CD4-positive, alpha-beta T cell (primary cell): ENCODE measurements at regions of chr2 and their contacts with region 1.

Region 1: DNA sequence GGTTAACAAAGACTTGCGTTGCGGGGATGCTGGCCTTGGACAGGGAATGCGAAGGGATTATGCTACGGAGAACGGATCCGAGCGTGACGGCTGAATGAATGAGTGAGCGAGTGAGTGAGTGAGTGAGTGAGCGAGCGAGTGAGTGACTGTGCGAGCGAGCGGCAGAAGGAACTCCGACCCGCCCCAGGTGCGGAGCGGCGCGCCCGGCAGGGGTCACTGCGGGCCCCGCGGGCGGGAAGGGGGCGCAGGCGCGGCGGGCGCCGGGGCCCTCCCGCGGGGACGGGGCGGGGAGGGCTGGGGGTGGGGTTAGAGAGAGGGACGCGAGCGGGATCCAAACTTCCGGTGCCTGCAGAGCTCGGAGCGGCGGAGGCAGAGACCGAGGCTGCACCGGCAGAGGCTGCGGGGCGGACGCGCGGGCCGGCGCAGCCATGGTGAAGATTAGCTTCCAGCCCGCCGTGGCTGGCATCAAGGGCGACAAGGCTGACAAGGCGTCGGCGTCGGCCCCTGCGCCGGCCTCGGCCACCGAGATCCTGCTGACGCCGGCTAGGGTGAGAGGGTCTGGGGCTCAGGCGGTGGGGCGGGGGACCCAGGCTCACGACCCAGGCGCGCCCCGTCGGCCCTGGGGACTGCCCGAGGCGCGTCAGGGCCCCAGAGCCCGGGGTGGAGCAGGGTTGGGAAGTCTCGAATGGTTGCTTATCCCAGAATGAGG is at the start of gene ITM2C:
- DNase-seq: peak; percentile 51 to 91 (median 71)
- ATAC-seq: peak; percentile 83
- H3K4me3 ChIP-seq: peak within 1 kb of the TSS; percentile 70
- H3K4me3 Mint-ChIP-seq: peak within 1 kb of the TSS; percentile 92
- H3K27ac ChIP-seq: peak within 1 kb of the TSS in 1 of 2 donors; percentile 21
- H3K27ac Mint-ChIP-seq: peak within 1 kb of the TSS; percentile 63
- H3K4me1 ChIP-seq: peaks cover 54% of the 10 kb centered on the region
- H3K4me1 Mint-ChIP-seq: peaks cover 53% of the 10 kb centered on the region
- H3K27me3 ChIP-seq: peaks cover 0 to 2% of the 10 kb centered on the region in 2 experiments
- H3K27me3 Mint-ChIP-seq: no peaks in the 10 kb centered on the region
- CTCF ChIP-seq: peak; percentile 35
- total RNA-seq, gene ITM2C: 19.8 to 21.5 TPM

Region 2: DNA sequence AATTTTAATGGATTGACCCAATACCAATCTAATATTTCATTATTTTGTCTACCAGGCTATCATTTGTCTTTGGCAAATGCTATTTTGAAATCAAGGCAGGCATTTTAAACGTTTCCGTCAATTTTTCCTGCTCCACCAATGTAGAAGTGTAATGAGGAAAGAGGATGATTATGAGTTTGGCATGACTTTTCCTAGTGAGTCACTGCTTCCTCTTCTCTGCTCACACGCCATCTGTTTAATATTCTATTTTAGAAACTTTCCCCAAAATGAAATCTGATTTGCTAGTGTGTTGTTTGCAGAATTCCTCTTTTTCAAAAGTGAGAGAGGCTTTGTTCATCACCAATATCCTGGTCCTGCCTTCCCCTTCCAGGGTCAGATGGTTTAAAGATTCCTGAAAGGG is 1551.2 kb before region 1 on chr2:
- CTCF ChIA-PET with region 1: no interaction called
- POLR2A ChIA-PET with region 1: no interaction called
- intact Hi-C with region 1: no loop called
- DNase-seq: peak in 2 of 14 experiments; percentile 55 to 61
- ATAC-seq: no peak
- H3K4me3 ChIP-seq: no peak overlapping the region
- H3K4me3 Mint-ChIP-seq: no peak overlapping the region
- H3K27ac ChIP-seq: peak overlapping the region in 1 of 2 donors; percentile 34
- H3K27ac Mint-ChIP-seq: no peak overlapping the region
- H3K4me1 ChIP-seq: no peaks in the 10 kb centered on the region
- H3K4me1 Mint-ChIP-seq: no peaks in the 10 kb centered on the region
- H3K27me3 ChIP-seq: no peaks in the 10 kb centered on the region
- H3K27me3 Mint-ChIP-seq: no peaks in the 10 kb centered on the region
- CTCF ChIP-seq: no peak

Region 3: DNA sequence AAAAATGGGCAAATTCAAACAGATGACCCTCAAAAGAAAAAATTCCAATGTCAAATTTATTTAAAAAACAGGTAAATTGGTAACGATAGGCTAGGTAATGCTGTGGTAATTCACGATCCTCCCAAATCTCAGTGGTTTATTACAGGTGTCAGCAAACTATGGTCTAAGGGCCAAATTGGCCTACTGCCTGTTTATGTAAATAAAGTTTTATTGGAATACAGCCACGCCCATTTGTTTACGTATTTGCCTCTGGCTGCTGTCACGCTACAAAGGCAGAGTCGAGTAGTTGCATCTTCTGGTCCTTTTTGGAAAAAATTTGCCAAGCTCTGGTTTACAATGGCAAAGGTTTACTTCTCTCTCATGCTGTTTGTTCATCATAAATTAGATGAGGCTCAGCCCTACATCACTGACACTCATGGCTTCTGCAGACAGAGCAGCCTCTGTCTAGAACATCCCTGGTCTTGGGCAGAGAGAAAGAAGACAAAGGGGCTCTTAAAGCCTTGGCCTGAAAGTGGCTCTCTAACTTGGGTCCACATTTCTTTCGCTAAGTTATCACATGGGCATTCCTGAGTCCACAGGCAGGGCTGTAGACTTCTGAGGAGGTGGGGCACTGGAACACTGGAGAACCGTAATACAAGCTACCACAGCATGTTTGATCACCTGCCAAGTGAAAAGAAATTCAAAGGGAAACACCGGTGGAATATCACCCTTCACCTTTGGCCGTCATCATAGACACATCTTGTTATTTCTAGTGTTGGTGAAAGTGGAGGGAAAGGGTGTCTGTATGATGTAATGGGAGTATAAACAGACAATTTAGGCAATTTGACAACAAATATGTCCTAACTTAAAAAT is 679.8 kb before region 1 on chr2:
- CTCF ChIA-PET with region 1: no interaction called
- POLR2A ChIA-PET with region 1: no interaction called
- intact Hi-C with region 1: no loop called
- DNase-seq: no peak
- ATAC-seq: no peak
- H3K4me3 ChIP-seq: no peak overlapping the region
- H3K4me3 Mint-ChIP-seq: no peak overlapping the region
- H3K27ac ChIP-seq: no peak overlapping the region
- H3K27ac Mint-ChIP-seq: peak overlapping the region; percentile 24
- H3K4me1 ChIP-seq: no peaks in the 10 kb centered on the region
- H3K4me1 Mint-ChIP-seq: peaks cover 9% of the 10 kb centered on the region
- H3K27me3 ChIP-seq: no peaks in the 10 kb centered on the region
- H3K27me3 Mint-ChIP-seq: no peaks in the 10 kb centered on the region
- CTCF ChIP-seq: no peak

Region 4: DNA sequence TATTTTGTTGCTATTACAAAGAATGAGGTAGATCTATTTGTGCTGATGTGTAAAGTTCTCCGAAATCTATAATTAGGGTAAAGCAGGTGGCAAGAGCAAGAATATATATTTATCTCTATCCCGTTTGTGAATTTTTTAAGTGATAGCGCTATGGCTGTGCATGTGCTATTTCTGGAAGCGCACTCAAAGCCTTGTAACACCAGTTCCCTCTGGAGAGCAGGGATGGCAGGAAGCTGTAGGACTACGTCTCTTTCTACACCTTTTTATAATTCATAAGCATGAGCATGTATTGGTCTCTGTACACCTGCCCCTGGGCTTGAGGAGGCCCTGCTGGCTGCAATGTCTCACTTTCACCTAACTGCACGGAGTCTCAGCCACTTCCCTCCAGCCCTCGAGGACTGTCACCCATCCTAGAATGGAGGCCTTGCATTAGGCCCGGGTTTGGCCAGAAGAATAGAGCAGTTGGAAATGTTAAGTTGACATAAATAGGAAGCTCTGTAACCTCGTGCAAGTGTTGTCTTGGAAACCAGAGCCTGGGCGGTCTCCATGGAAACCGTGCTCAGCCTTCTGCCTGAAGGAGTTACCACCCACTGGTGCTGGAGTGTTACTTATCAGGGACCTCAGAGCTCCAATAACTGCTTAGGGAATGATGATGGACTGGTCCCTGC is 20.8 kb after region 1 on chr2:
- CTCF ChIA-PET with region 1: no interaction called
- POLR2A ChIA-PET with region 1: no interaction called
- intact Hi-C with region 1: no loop called
- DNase-seq: peak in 1 of 14 experiments; percentile 23
- ATAC-seq: no peak
- H3K4me3 ChIP-seq: no peak overlapping the region
- H3K4me3 Mint-ChIP-seq: no peak overlapping the region
- H3K27ac ChIP-seq: no peak overlapping the region
- H3K27ac Mint-ChIP-seq: no peak overlapping the region
- H3K4me1 ChIP-seq: peaks cover 2% of the 10 kb centered on the region
- H3K4me1 Mint-ChIP-seq: no peaks in the 10 kb centered on the region
- H3K27me3 ChIP-seq: peaks cover 0 to under 1% of the 10 kb centered on the region in 2 experiments
- H3K27me3 Mint-ChIP-seq: peaks cover 4% of the 10 kb centered on the region
- CTCF ChIP-seq: no peak

Region 5: DNA sequence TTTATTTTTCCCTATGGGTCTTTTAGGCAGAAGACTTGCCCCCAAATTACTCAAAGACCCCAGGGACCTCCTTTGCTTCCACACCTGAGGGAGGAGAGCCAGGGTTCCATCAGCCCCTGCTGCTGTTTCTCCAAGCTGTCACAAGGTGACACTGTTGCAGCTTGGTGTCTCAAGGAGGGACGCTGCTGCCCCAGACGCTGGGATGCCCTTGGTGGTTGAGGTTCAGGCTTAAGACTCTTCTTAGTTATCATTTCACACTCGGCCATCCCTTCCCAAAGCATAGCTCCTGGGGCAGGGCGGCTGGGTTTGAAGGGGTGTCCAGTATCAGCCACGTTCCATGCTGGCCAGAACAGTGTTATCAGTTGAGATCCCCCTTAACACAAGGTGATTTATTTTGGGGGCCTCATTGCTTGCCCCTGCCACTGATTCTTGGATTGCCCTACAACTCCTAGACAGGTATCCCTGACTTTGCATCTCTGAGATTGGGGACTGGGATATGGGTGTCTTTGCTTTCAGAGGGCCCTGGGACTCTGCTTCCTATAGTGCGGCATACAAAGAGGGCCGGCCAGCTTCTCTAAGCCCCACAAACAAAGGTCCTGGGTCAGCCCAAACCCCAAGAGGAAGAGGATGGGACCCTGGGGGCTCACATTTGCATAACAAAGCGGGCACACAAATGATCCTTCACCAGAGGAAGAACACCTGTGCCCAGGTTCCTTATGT is 37.6 kb after region 1 on chr2:
- CTCF ChIA-PET with region 1: interaction called, 4 read pairs
- POLR2A ChIA-PET with region 1: interaction called, 3 read pairs
- intact Hi-C with region 1: loop called in 1 of 2 experiments (anchors 2 kb)
- DNase-seq: peak; percentile 29 to 82 (median 42)
- ATAC-seq: peak; percentile 19
- H3K4me3 ChIP-seq: no peak overlapping the region
- H3K4me3 Mint-ChIP-seq: no peak overlapping the region
- H3K27ac ChIP-seq: no peak overlapping the region
- H3K27ac Mint-ChIP-seq: no peak overlapping the region
- H3K4me1 ChIP-seq: peaks cover 27% of the 10 kb centered on the region
- H3K4me1 Mint-ChIP-seq: peaks cover 33% of the 10 kb centered on the region
- H3K27me3 ChIP-seq: no peaks in the 10 kb centered on the region
- H3K27me3 Mint-ChIP-seq: no peaks in the 10 kb centered on the region
- CTCF ChIP-seq: peak; percentile 70

Region 6: DNA sequence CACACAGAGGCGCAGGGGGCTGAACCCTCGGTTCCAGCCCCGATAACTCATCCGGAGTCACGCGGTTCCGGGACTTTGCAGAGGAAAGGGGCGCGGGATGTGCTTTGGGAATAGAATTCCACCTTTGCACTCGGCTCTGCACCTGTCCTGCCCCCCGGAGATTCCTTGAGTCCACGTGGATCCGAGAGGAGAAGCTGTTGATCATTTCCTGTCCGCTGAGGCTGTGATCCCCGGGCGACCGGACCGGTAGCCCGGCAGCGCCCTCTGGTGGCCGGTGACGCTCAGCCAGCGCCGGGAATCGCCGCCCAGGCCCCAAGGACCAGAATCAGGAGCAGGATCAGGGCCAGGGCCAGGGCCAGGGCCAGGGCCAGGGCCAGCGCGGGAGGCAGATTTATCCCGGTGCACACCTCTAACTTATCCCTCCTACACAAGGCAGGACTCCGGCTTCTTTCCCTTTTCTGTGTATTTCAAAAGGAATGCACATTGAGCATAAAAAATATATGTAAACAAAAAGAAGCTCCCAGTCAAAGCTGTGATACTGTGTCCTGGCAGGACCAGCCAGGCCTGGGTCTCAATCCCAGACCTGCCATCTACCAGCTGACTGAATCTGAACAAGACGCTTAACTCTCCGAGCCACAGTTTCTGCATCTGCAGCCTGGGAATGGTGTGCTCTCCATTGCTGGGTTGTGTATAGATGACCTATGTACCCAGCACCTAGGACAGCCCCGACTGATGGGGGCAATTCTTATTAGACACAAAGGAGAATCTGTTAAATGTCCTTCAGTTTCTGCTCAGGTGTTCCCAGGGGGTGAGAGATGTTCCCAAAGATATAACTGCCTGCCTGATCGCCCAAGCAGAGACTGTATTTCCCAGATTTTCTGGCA is 122.6 kb after region 1 on chr2:
- CTCF ChIA-PET with region 1: interaction called, 10 read pairs
- POLR2A ChIA-PET with region 1: interaction called, 5 read pairs
- intact Hi-C with region 1: no loop called
- DNase-seq: peak; percentile 36 to 86 (median 73)
- ATAC-seq: peak; percentile 74
- H3K4me3 ChIP-seq: peak overlapping the region; percentile 59
- H3K4me3 Mint-ChIP-seq: peak overlapping the region; percentile 38
- H3K27ac ChIP-seq: no peak overlapping the region
- H3K27ac Mint-ChIP-seq: no peak overlapping the region
- H3K4me1 ChIP-seq: peaks cover 31% of the 10 kb centered on the region
- H3K4me1 Mint-ChIP-seq: peaks cover 22% of the 10 kb centered on the region
- H3K27me3 ChIP-seq: peaks cover 6 to 10% of the 10 kb centered on the region in 2 experiments
- H3K27me3 Mint-ChIP-seq: peaks cover 24% of the 10 kb centered on the region
- CTCF ChIP-seq: peak; percentile 92